ENCODE measurements at regions of chr4 and their contacts with region 1.

Region 1: GRCh38 chr4:158121187-158121586 is 51.6 kb downstream of the GASK1B start:
- DNase-seq: peak in 1 of 2 experiments; percentile 46
- H3K4me3 ChIP-seq: no peak overlapping the region
- H3K4me3 Mint-ChIP-seq: peak overlapping the region; percentile 40
- H3K27ac Mint-ChIP-seq: peak overlapping the region; percentile 68
- H3K4me1 ChIP-seq: peaks cover 8% of the 10 kb centered on the region; the same call in 1 of the 2 replicates
- H3K4me1 Mint-ChIP-seq: peaks cover 6% of the 10 kb centered on the region
- H3K27me3 ChIP-seq: no peaks in the 10 kb centered on the region
- H3K27me3 Mint-ChIP-seq: no peaks in the 10 kb centered on the region
- CTCF ChIP-seq: no peak

Region 2: DNA sequence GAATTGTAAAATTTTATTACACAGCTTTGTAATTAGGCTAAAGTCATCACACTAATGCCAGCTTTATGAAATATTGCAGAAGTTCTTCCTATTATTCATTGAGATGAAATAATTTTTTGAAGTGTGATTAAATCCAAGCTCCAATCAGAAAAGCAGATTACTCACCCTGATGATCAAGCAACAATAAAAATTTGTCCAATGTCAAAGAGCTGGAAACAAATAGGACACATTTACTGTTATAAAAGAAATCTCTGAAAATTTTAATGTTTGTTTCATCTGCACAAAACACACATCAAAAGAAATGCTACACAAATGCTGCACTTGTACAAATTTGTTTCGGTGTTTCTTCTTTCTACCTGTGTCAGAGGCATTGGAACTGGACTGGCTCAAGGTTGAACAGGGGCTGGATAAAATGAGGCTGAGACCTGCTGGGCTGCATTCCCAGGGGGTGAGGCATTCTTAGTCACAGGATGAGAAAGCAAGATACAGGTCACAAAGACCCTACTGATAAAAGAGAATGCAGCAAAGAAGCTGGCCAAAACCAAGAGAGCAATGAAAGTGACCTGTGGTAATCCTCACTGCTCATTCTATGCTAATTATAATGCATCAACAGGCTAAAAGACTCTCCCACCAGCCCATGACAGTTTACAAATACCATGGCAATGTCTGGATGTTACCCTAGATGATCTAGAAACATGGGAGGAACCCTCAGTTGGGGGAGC is 26.6 kb before region 1 on chr4:
- CTCF ChIA-PET with region 1: no interaction called
- POLR2A ChIA-PET with region 1: no interaction called
- intact Hi-C with region 1: loop called (anchors 1 kb)
- DNase-seq: peak; percentile 78 to 80
- H3K4me3 ChIP-seq: no peak overlapping the region
- H3K4me3 Mint-ChIP-seq: peak overlapping the region; percentile 60
- H3K27ac Mint-ChIP-seq: peak overlapping the region; percentile 82
- H3K4me1 ChIP-seq: peaks cover 8% of the 10 kb centered on the region
- H3K4me1 Mint-ChIP-seq: peaks cover 12% of the 10 kb centered on the region
- H3K27me3 ChIP-seq: no peaks in the 10 kb centered on the region
- H3K27me3 Mint-ChIP-seq: no peaks in the 10 kb centered on the region
- CTCF ChIP-seq: no peak

Region 3: GRCh38 chr4:158159054-158159717 is 38.0 kb after region 1 on chr4:
- CTCF ChIA-PET with region 1: no interaction called
- POLR2A ChIA-PET with region 1: no interaction called
- intact Hi-C with region 1: loop called (anchors 5 kb)
- DNase-seq: no peak
- H3K4me3 ChIP-seq: no peak overlapping the region
- H3K4me3 Mint-ChIP-seq: no peak overlapping the region
- H3K27ac Mint-ChIP-seq: no peak overlapping the region
- H3K4me1 ChIP-seq: peaks cover 66% of the 10 kb centered on the region
- H3K4me1 Mint-ChIP-seq: peaks cover 40% of the 10 kb centered on the region
- H3K27me3 ChIP-seq: no peaks in the 10 kb centered on the region
- H3K27me3 Mint-ChIP-seq: no peaks in the 10 kb centered on the region
- CTCF ChIP-seq: no peak

Region 4: DNA sequence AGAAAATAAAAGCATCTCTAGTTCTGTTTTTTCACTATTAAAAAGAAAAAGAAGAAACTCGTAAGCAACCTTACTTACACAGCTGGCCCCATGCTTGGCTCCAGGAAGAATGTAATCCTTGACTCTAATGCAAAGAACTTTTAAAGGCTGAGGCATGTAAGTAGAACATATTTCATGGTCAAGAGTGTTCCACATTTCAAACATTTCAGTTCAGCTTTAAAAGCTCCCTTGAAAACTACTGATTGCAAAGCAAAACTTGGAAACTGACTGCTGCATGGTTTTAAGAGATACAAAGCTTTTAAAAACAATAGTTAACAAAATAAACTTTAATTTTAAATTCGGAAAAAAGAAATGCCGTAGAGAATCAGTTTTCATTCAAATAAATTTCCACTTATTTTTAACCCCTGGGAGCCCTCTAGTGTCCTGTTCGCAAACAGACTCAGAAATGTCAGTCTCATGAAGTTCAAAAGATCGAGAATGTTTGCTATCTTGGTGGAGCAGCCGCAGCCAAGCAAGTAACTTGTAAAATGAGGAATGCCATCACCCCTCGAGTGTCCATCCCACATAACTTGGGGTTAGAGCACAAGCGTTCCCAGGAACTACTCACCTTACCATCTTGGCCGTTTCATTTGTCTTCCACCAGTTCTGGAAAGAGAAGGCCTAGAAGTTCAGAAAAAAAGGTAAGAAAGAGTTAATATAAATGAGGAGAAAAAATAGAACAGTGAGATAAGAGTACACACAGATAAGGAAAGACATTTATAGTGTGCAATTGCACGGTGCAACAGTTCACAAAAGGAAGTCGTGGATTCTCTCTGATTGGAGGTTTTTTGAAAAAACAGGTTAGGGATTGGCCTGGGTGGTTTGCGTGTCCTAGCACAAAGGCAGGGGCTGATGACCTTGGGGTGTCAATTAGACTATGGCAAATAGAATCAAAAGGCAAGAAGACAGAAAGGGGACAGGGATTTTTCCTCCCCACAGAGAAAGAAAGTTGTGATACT is 51.4 kb after region 1 on chr4 and contains the start of gene GASK1B:
- CTCF ChIA-PET with region 1: no interaction called
- POLR2A ChIA-PET with region 1: no interaction called
- intact Hi-C with region 1: loop called (anchors 1 kb)
- DNase-seq: peak; percentile 56 to 68
- H3K4me3 ChIP-seq: peak within 1 kb of the TSS; percentile 49
- H3K4me3 Mint-ChIP-seq: peak within 1 kb of the TSS; percentile 89
- H3K27ac Mint-ChIP-seq: peak within 1 kb of the TSS; percentile 97
- H3K4me1 ChIP-seq: peaks cover 14% of the 10 kb centered on the region
- H3K4me1 Mint-ChIP-seq: peaks cover 14% of the 10 kb centered on the region
- H3K27me3 ChIP-seq: no peaks in the 10 kb centered on the region
- H3K27me3 Mint-ChIP-seq: no peaks in the 10 kb centered on the region
- CTCF ChIP-seq: peak; percentile 25 to 27
- total RNA-seq, gene GASK1B: 42.5 and 48.5 TPM in 2 replicates

Measured in Caco-2 (cell line).